Activated CD4-positive, alpha-beta memory T cell treated with anti-CD3 and anti-CD28 coated beads for 36 hours (primary cell): ENCODE measurements at regions of chr7 and their contacts with region 1.

Region 1: DNA sequence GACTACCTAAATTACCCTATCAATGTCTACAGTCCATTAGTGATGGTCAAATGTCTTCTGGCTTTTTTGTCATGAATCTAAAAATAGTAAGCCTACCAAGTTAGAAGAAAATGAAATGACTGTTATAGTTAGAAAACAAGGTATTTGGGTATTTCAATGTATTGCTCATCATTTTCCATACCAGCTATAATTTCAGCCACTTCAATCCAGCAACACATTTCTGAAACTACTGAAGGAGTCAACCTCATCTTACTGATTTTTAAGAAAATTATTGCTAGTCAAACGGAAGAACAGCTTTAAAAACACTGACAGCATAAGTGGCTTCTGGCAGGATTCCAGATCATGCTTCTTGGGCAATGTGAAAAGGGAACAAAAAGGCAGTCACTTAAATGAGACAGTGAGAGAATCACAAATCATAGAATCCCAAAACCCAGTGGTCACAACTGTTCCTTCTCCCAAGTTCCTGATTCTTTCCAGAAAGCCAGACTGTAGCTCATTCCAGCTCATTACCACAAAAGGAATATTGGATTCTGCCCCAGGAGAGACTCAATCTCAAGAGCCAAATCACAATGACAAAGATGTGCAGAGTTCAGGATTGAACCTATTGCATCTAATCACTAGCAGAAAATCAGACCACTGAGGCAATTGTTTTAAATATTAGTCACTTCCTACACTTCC is 61.2 kb upstream of the LRRN3 start:
- DNase-seq: peak; percentile 53
- H3K4me3 Mint-ChIP-seq: peak overlapping the region; percentile 24
- H3K27ac Mint-ChIP-seq: peak overlapping the region; percentile 82
- H3K4me1 Mint-ChIP-seq: peaks cover 53% of the 10 kb centered on the region
- H3K27me3 Mint-ChIP-seq: no peaks in the 10 kb centered on the region

Region 2: DNA sequence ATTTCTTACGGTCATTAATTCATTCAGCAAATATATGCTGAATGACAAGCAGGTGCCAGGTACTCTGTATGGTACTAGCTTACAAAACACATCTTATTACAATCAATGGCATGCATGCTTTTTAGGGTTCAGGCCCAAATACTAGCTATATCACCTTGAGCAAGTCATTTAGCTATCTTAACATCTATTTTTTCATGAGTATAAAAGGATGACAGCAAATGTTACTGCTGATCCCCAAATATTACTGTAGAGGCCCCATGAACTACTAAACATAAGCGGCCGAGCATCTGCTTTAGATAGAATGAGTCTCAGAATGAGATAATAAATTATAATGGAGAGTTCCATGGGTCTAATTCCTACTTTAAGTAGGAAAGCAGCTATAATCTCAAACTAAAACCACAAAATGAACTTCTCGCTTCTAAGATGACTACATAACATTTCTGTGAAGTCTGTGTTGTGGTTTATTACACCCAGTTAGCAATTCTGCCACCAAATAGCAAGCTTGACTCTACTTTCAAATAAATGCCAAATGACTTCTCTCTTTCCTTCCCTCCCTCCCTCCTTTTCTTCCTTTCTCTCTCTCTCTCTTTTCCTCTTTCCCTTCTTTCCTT is 52.5 kb before region 1 on chr7:
- CTCF ChIA-PET with region 1: no interaction called
- POLR2A ChIA-PET with region 1: interaction called, 3 read pairs
- intact Hi-C with region 1: loop called (anchors 2 kb)
- DNase-seq: no peak
- H3K4me3 Mint-ChIP-seq: peak overlapping the region; percentile 28
- H3K27ac Mint-ChIP-seq: peak overlapping the region; percentile 59
- H3K4me1 Mint-ChIP-seq: peaks cover 24% of the 10 kb centered on the region
- H3K27me3 Mint-ChIP-seq: no peaks in the 10 kb centered on the region

Region 3: GRCh38 chr7:111012799-111013675 is 16.7 kb before region 1 on chr7:
- CTCF ChIA-PET with region 1: interaction called, 3 read pairs
- POLR2A ChIA-PET with region 1: interaction called, 7 read pairs
- intact Hi-C with region 1: loop called (anchors 1 kb)
- DNase-seq: peak; percentile 59
- H3K4me3 Mint-ChIP-seq: peak overlapping the region; percentile 59
- H3K27ac Mint-ChIP-seq: peak overlapping the region; percentile 84
- H3K4me1 Mint-ChIP-seq: peaks cover 60% of the 10 kb centered on the region
- H3K27me3 Mint-ChIP-seq: no peaks in the 10 kb centered on the region

Region 4: DNA sequence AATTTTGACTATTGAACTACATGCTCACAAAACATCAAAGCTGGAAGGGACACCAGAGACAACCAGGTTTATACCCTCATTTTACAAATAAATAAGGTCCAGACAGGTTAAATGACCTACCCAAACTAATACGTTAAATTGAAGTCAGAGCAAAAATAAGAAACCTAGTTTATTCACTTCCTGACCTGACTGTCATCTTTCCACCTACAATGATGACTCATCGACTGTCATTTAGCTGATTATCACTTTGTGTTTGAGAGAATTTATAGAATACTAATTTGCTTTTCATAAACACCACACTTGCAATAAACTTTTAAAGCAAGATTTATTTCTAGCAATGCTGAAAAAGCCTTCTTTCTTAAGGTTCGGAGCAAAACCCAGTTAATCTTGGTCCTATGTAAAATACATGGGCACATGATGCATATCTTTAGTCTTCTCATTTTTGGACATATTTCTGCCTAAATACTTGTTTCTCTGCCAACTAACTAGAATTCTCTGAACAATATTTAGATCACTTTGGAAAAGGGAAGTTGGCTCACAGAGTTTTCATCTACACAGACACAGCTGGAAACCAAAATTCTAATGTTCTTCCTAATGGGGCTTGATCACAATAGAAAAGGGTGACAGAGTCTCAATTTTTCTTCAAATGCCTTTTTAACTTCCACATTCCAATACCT is 44.5 kb after region 1 on chr7:
- CTCF ChIA-PET with region 1: no interaction called
- POLR2A ChIA-PET with region 1: interaction called, 5 read pairs
- intact Hi-C with region 1: loop called (anchors 1 kb)
- DNase-seq: no peak
- H3K4me3 Mint-ChIP-seq: no peak overlapping the region
- H3K27ac Mint-ChIP-seq: peak overlapping the region; percentile 77
- H3K4me1 Mint-ChIP-seq: peaks cover 44% of the 10 kb centered on the region
- H3K27me3 Mint-ChIP-seq: no peaks in the 10 kb centered on the region

Region 5: DNA sequence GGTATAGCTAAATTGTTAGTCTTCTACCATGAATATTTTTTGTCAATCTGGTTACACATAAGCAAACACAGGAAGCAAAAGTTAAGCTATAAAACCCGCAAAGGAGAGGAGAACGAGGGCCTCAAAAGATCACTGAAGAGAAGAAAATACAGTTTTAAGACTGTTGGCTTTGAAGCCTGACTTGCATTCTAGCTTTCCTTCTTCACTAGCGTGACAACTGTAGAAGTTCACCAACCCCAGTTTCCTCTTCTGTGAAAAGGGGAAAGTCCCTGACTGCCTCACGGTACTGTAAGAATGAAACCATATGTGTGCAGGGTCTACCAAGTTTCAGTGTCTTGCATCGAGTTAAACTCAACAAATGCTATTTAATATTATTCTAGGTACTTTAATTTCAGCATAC is 53.7 kb after region 1 on chr7:
- CTCF ChIA-PET with region 1: interaction called, 7 read pairs
- POLR2A ChIA-PET with region 1: interaction called, 16 read pairs
- intact Hi-C with region 1: loop called (anchors 1 kb)
- DNase-seq: peak; percentile 60
- H3K4me3 Mint-ChIP-seq: peak overlapping the region; percentile 13
- H3K27ac Mint-ChIP-seq: peak overlapping the region; percentile 90
- H3K4me1 Mint-ChIP-seq: peaks cover 70% of the 10 kb centered on the region
- H3K27me3 Mint-ChIP-seq: no peaks in the 10 kb centered on the region

Region 6: GRCh38 chr7:111561885-111562732 is 532.4 kb after region 1 on chr7 and contains the start of gene IMMP2L:
- CTCF ChIA-PET with region 1: no interaction called
- POLR2A ChIA-PET with region 1: no interaction called
- intact Hi-C with region 1: loop called (anchors 10 kb)
- DNase-seq: peak; percentile 93
- H3K4me3 Mint-ChIP-seq: peak within 1 kb of the TSS; percentile 83
- H3K27ac Mint-ChIP-seq: peak within 1 kb of the TSS; percentile 79
- H3K4me1 Mint-ChIP-seq: peaks cover 40% of the 10 kb centered on the region
- H3K27me3 Mint-ChIP-seq: peaks cover 4% of the 10 kb centered on the region
- total RNA-seq, gene IMMP2L: 14.4 to 20.5 TPM